ENCODE measurements at regions of chr6 and their contacts with region 1.

Region 1: GRCh38 chr6:24581084-24581669 is 64.8 kb downstream of the KIAA0319 start:
- DNase-seq: peak; percentile 85
- H3K4me3 Mint-ChIP-seq: no peak overlapping the region
- H3K27ac Mint-ChIP-seq: no peak overlapping the region
- H3K4me1 Mint-ChIP-seq: peaks cover 2% of the 10 kb centered on the region
- H3K27me3 Mint-ChIP-seq: no peaks in the 10 kb centered on the region

Region 2: DNA sequence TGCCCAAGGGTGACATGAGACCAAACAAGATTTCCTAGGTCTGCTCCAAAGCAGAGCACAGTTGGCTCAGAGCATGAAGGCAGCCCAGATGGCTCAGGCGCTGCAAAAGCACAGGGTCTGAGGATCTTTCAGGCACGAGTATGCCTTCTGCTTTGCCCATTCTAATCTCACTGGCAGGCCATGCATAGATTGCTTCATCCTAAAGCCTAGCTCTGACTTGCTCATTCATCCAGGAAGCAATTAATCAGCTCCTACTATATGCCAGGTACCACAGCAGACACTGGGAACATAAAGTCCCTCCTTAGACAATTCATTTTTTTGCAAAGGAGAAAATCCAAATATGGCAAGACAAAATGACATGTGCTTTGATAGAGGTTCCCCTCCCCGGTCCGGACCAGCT is 123.0 kb before region 1 on chr6:
- CTCF ChIA-PET with region 1: no interaction called
- POLR2A ChIA-PET with region 1: no interaction called
- intact Hi-C with region 1: no loop called
- DNase-seq: no peak
- H3K4me3 Mint-ChIP-seq: no peak overlapping the region
- H3K27ac Mint-ChIP-seq: no peak overlapping the region
- H3K4me1 Mint-ChIP-seq: no peaks in the 10 kb centered on the region
- H3K27me3 Mint-ChIP-seq: no peaks in the 10 kb centered on the region

Region 3: DNA sequence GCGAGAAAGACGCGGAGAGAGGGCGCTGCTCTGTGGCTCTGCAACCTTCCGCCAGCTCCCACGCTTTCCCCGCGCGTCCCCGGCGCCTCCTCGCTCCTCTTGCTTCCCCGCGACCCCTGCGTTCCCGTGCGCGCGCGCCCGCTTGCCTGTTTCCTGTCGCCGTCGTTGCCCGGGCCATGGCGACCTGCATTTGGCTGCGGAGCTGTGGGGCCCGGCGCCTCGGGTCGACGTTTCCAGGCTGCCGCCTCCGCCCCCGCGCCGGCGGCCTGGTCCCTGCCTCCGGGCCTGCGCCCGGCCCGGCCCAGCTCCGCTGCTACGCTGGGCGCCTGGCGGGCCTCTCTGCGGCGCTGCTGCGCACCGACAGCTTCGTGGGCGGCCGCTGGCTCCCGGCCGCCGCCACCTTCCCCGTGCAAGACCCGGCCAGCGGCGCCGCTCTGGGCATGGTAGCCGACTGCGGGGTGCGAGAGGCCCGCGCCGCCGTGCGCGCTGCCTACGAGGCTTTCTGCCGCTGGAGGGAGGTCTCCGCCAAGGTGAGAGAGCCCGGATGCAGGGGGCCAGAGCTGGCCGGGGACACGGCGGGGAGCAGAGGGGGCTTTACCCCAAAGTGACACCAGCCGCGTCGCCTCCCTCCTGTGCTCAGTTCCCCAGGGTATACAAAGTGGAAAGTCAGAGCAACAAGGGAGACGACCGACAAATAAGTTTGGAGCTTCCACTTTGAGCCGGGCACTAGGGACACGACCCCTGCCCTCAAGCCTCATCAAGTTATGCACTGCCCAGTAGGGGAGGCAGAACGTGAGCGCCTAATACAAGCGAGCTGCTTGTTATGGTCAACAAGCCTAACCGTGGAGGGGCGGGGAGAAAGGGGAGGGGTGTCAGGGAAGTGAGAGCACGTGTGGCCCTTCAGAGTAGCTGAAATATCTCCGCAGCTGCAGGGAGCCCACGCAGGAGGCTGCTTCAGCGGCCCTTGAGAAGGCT is 86.1 kb before region 1 on chr6 and contains the start of gene ALDH5A1:
- CTCF ChIA-PET with region 1: interaction called, 10 read pairs
- POLR2A ChIA-PET with region 1: no interaction called
- intact Hi-C with region 1: no loop called
- DNase-seq: peak; percentile 89
- H3K4me3 Mint-ChIP-seq: peak within 1 kb of the TSS; percentile 78
- H3K27ac Mint-ChIP-seq: peak within 1 kb of the TSS; percentile 44
- H3K4me1 Mint-ChIP-seq: peaks cover 13% of the 10 kb centered on the region
- H3K27me3 Mint-ChIP-seq: no peaks in the 10 kb centered on the region
- total RNA-seq, gene ALDH5A1: 13.1 to 13.9 TPM

Region 4: DNA sequence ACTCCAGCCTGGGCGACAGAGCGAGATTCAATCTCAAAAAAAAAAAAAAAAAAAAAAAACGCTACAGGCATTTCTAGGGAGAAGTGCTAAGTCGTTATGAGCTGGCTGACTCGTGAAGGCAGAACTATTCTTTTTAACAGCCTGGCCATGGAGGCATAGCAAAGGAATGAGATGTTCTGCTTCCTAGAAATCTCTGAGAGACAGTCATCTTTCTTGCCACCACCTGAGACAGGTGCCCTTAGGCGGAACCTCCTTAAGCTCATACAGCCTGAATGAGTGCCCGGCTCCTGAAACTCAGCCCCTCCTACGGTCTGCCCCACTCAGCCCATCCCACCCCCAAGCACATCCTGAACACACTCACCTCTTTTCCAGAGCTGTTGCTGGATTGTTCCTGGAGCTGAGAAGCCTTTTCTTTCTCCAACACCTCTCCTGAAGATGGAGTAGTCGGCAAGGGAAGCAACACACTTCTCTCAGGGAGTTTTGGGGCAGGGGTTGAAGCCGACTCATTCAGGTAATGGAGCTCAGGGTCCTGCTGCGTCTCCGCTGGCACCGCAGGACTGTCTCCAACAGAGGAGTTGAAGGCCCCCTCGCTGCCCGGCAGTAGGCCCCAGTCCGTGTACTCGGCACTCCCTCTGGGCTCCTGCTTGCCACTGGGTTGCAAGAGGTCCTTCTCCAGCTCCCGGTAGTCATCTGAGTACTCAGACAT is 14.5 kb after region 1 on chr6:
- CTCF ChIA-PET with region 1: interaction called, 10 read pairs
- POLR2A ChIA-PET with region 1: no interaction called
- intact Hi-C with region 1: no loop called
- DNase-seq: no peak
- H3K4me3 Mint-ChIP-seq: no peak overlapping the region
- H3K27ac Mint-ChIP-seq: no peak overlapping the region
- H3K4me1 Mint-ChIP-seq: no peaks in the 10 kb centered on the region
- H3K27me3 Mint-ChIP-seq: peaks cover 4% of the 10 kb centered on the region

Region 5: DNA sequence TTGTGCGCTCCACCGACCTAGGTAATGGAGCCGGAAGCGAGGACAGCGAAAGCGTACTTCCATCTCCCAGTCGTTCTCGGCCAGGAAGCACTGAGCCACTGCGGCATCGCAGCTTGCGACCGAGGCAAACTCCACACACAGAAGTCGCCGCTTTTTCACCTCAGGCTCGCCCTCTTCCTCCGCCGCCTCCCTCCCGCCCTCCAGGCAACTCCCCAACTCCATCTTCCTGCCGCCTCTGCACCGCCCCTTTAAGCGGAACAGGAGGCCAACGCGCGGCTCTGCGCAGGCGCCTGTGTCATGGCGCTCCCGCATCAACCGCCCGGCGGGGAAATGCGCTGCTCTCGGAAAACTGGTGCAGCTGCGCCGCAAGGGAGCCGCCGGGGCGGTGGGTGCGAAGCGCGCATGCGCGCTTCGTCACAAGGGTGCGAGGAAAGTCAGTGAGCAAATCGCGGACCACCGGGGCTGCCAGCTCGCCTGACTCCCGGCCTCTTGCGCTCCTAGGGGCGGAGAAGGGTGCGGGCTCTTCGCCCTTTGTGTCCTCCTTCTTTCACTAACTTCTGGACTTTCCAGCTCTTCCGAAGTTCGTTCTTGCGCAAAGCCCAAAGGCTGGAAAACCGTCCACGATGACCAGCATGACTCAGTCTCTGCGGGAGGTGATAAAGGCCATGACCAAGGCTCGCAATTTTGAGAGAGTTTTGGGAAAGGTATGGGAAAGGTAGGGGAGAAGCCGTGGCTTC is 85.6 kb after region 1 on chr6 and contains the starts of genes ACOT13 and TDP2:
- CTCF ChIA-PET with region 1: interaction called, 17 read pairs
- POLR2A ChIA-PET with region 1: no interaction called
- intact Hi-C with region 1: loop called (anchors 1 kb)
- DNase-seq: peak; percentile 98
- H3K4me3 Mint-ChIP-seq: peak within 1 kb of the TSS; percentile 95
- H3K27ac Mint-ChIP-seq: peak within 1 kb of the TSS; percentile 93
- H3K4me1 Mint-ChIP-seq: peaks cover 53% of the 10 kb centered on the region
- H3K27me3 Mint-ChIP-seq: no peaks in the 10 kb centered on the region
- total RNA-seq, gene ACOT13: 33.7 to 35.9 TPM
- total RNA-seq, gene TDP2: 47.5 to 48.6 TPM

Region 6: DNA sequence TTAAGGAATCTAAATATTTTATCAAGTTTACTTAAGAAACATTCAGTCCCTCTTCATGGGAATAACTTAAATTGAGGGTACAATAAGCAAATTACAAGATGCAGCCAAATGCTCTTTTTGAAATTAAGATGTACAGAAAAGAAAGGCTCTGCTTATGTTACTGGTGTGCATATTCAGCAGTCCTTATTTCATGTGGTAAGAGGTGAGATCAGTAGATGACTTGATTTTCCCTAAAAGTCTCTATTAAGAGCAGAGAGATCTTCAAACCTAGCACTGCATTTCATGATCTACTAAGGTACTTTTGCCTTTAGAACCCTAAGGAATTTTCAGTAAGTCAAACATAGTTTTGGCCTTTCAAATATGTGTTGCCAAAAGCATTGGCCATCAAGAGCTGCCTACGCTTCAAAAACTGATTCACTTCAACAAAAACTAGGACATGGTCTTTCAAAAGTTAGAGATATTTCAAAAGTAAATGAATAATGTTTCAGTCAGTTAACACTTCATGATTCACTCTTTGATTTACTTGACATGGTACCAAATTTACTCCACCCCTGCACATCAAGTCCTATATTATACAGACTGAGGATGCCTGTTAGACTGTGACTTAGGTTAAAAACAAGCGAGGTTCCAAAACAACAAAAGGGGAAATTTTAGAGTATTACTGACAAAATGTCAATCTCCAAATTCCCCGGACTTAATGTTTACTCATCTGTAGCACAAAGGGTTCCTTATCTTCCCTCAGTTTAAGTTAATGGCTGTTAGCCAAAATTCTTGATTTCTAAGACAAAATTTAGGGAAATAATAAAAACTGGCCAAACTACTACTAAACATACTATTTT is 118.6 kb after region 1 on chr6:
- CTCF ChIA-PET with region 1: interaction called, 82 read pairs
- POLR2A ChIA-PET with region 1: no interaction called
- intact Hi-C with region 1: loop called (anchors 1 kb)
- DNase-seq: no peak
- H3K4me3 Mint-ChIP-seq: no peak overlapping the region
- H3K27ac Mint-ChIP-seq: peak overlapping the region; percentile 88
- H3K4me1 Mint-ChIP-seq: peaks cover 61% of the 10 kb centered on the region
- H3K27me3 Mint-ChIP-seq: no peaks in the 10 kb centered on the region

Region 7: GRCh38 chr6:25070547-25071366 is 489.6 kb after region 1 on chr6:
- CTCF ChIA-PET with region 1: interaction called, 6 read pairs
- POLR2A ChIA-PET with region 1: no interaction called
- intact Hi-C with region 1: loop called (anchors 5 kb)
- DNase-seq: peak; percentile 90
- H3K4me3 Mint-ChIP-seq: peak overlapping the region; percentile 44
- H3K27ac Mint-ChIP-seq: peak overlapping the region; percentile 78
- H3K4me1 Mint-ChIP-seq: peaks cover 10% of the 10 kb centered on the region
- H3K27me3 Mint-ChIP-seq: no peaks in the 10 kb centered on the region